Thyroid gland (tissue), 4 donors: ENCODE measurements at regions of chr19 and their contacts with region 1.

Region 1: GRCh38 chr19:36665832-36666231 is 805 bp downstream of the ZNF461 start:
- DNase-seq: no peak
- H3K4me3 ChIP-seq: peak overlapping the region in 2 of 3 donors; percentile 7 to 62
- H3K27ac ChIP-seq: no peak overlapping the region
- H3K4me1 ChIP-seq: peaks cover 12 to 16% of the 10 kb centered on the region in 2 donors
- H3K27me3 ChIP-seq: no peaks in the 10 kb centered on the region
- CTCF ChIP-seq: no peak
- POLR2A ChIP-seq: no peak

Region 2: GRCh38 chr19:36685835-36686234 is 20.0 kb after region 1 on chr19:
- intact Hi-C with region 1: loop called (anchors 2 kb)
- DNase-seq: no peak
- H3K4me3 ChIP-seq: no peak overlapping the region
- H3K27ac ChIP-seq: no peak overlapping the region
- H3K4me1 ChIP-seq: peaks cover 12 to 15% of the 10 kb centered on the region in 2 donors
- H3K27me3 ChIP-seq: no peaks in the 10 kb centered on the region
- CTCF ChIP-seq: no peak
- POLR2A ChIP-seq: no peak

Region 3: DNA sequence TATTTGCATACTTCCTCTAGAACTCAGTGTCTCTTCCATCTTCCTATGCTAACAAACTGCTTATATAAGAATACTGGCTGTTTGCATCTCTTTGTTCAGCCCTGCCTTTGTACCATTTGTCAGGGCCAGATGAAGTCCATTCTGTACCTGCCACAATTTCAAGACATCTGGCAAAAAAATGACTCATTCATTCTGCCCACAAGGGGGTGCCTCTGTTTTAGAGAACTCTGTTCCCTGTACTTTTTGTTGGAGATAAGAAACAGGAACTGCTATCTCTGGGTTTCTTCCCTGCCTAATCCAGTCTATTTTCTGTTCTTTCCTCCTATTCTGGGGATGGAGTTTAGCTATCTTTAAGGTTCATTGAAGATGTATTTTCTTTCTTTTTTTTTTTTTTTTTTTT is 273.3 kb after region 1 on chr19:
- intact Hi-C with region 1: no loop called
- DNase-seq: no peak
- H3K4me3 ChIP-seq: no peak overlapping the region
- H3K27ac ChIP-seq: no peak overlapping the region
- H3K4me1 ChIP-seq: no peaks in the 10 kb centered on the region
- H3K27me3 ChIP-seq: no peaks in the 10 kb centered on the region
- CTCF ChIP-seq: peak in 1 of 6 experiments; percentile 24
- POLR2A ChIP-seq: no peak